ENCODE measurements at regions of chr9 and their contacts with region 1.

Region 1: DNA sequence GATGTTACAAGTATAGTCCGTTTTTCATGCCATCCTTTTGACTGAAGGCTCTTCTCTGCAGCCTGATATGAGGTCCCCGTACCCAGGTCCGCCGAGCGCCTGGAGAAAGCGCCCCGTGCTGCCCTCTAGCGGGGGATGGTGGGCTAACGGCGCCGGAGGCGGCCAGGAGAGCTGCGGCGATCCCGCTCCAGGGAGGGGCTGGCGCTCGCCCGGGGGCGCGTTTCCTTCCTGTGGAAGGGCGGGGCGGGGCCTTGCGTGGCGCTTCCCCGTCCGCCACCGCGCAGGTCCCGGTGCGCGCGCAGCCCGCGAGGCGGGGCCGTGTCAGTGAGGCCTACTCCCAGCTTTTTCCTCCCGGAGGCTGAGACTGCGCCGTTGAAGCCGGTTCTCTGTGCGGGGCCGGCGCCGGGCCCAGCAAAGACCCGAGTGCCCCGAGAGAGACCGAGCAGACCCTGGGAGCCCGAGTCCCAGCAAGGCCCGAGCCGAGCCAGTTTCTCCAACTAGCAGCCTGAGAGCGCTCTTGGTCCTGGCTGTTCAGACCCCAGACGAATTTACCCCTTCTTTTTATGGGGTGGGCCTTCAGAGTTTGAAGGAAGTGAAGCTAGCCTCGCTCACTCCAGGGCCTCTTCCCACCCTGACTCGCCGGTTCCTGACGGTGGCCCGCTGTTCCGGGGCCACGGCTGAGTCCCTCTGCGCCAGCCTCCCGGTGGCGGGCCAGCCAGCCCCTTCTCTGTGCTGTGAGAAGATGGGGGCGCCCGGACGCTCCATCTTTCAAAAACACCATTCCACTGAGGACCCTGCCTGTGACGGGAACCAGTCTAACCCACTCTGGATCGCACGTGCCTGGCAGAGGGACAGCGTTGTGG is 9.7 kb upstream of the PHF2 start:
- DNase-seq: peak; percentile 87
- H3K4me3 ChIP-seq: peak overlapping the region; percentile 74
- H3K27ac ChIP-seq: peak overlapping the region; percentile 91
- H3K27me3 ChIP-seq: no peaks in the 10 kb centered on the region
- CTCF ChIP-seq: peak; percentile 94

Region 2: DNA sequence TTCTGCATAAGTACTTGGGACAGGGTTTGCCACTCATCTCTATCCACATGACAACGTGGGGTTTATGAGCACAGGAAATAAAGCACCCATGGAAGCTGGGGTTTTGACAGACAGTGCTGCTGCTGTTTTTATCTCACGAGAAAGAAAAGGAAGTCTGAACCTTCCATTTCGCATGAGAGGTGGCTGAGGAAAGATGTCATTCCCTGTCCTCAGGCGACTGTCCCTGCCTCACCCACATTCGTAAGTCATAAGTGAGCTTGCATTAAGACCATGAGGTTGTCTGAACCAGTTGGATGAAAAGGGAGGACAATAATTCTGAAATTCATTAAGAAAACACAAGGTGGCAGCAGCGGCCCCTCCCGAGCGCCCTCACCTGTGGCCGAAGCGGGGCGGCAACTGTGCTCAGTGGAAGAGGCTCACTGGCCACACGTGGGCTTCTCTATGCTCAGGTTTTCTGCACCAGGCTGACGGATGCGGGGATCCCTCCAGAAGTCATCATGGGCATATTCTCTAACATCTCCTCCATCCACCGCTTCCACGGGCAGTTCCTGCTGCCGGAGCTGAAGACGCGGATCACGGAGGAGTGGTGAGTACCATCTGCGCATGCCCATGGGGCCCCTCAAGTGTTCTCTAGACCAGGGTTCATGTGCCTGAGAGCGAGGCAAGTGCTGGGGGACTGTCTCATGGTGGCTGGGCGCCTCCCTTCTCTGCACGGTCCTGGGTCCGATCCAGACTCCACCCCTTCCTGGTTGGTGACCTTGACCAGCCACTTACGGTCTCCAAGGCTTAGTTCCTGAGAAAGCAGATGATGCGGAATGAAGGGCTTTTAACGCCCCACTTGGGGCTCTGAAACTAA is 562.9 kb before region 1 on chr9:
- CTCF ChIA-PET with region 1: no interaction called
- POLR2A ChIA-PET with region 1: no interaction called
- DNase-seq: peak; percentile 1
- H3K4me3 ChIP-seq: no peak overlapping the region
- H3K27ac ChIP-seq: no peak overlapping the region
- H3K27me3 ChIP-seq: no peaks in the 10 kb centered on the region
- CTCF ChIP-seq: peak; percentile 69

Region 3: GRCh38 chr9:93447655-93448054 is 119.0 kb before region 1 on chr9:
- CTCF ChIA-PET with region 1: interaction called, 63 read pairs
- POLR2A ChIA-PET with region 1: interaction called, 13 read pairs
- DNase-seq: no peak
- H3K4me3 ChIP-seq: no peak overlapping the region
- H3K27ac ChIP-seq: no peak overlapping the region
- H3K27me3 ChIP-seq: no peaks in the 10 kb centered on the region
- CTCF ChIP-seq: no peak

Region 4: DNA sequence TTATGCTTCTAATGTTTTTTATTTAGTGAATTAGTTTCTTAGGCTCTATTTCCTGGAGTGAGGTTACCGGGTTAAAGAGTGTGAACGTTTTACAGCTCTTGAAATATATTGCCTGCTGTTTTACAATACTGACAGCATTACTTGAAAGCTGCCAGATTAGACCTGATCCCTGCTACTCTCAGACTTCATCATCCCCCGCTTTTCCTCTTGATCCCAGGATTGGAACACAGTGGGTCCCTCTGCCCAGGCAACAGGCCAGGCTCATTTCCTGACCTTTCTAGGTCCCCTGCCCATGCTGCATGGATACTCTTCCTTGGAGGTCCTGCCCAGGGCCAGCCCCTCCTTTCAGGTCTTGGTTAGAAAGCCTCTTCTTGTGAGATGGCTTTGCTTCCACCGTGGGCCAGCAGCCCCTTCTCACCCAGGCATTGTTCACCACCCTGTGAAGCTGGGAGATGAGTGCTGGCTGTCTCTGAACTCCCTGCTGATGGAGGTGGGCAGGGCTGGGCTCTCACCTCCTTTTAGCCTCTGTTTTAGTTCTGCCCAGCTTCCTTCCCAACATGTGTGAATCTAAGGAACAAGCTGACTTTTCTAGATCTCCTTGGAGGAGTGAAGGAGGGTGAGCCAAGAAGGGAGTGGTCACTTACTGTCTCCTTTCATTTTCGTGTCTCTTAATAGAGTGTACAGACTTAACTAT is 97.7 kb before region 1 on chr9:
- CTCF ChIA-PET with region 1: interaction called, 25 read pairs
- POLR2A ChIA-PET with region 1: no interaction called
- DNase-seq: no peak
- H3K4me3 ChIP-seq: peak overlapping the region; percentile 30
- H3K27ac ChIP-seq: no peak overlapping the region
- H3K27me3 ChIP-seq: no peaks in the 10 kb centered on the region
- CTCF ChIP-seq: no peak

Region 5: GRCh38 chr9:93483497-93483896 is 83.1 kb before region 1 on chr9:
- CTCF ChIA-PET with region 1: interaction called, 15 read pairs
- POLR2A ChIA-PET with region 1: no interaction called
- DNase-seq: no peak
- H3K4me3 ChIP-seq: no peak overlapping the region
- H3K27ac ChIP-seq: no peak overlapping the region
- H3K27me3 ChIP-seq: no peaks in the 10 kb centered on the region
- CTCF ChIP-seq: no peak

Region 6: GRCh38 chr9:93536874-93537273 is 29.8 kb before region 1 on chr9:
- CTCF ChIA-PET with region 1: interaction called, 26 read pairs
- POLR2A ChIA-PET with region 1: no interaction called
- DNase-seq: no peak
- H3K4me3 ChIP-seq: no peak overlapping the region
- H3K27ac ChIP-seq: no peak overlapping the region
- H3K27me3 ChIP-seq: no peaks in the 10 kb centered on the region
- CTCF ChIP-seq: no peak

Region 7: DNA sequence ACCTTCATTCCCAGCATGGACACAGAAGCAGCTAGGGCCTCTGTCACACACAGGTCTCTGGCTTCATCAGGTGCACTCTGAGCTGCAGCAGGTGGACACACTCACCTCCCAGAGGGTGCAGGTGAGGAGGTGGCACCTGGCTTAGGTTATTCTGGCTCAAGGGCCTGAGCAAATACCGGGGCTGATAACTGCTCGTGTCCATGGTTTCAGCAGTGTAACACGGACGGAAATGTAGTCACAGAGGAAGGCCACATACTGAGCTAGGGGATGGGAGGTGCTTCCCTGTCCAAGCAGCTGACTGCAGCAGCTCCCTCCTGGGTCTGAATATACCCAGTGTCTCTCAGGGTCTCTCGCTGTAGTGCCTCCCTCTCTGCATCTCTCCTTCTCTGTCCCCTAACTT is 15.5 kb after region 1 on chr9:
- CTCF ChIA-PET with region 1: interaction called, 22 read pairs
- POLR2A ChIA-PET with region 1: interaction called, 6 read pairs
- DNase-seq: no peak
- H3K4me3 ChIP-seq: no peak overlapping the region
- H3K27ac ChIP-seq: no peak overlapping the region
- H3K27me3 ChIP-seq: no peaks in the 10 kb centered on the region
- CTCF ChIP-seq: no peak

Region 8: GRCh38 chr9:93801581-93802284 is 235.1 kb after region 1 on chr9:
- CTCF ChIA-PET with region 1: no interaction called
- POLR2A ChIA-PET with region 1: no interaction called
- DNase-seq: no peak
- H3K4me3 ChIP-seq: no peak overlapping the region
- H3K27ac ChIP-seq: no peak overlapping the region
- H3K27me3 ChIP-seq: no peaks in the 10 kb centered on the region
- CTCF ChIP-seq: no peak

Measured in AG04450 (cell line).